ENCODE measurements at regions of chr2 and their contacts with region 1.

Region 1: DNA sequence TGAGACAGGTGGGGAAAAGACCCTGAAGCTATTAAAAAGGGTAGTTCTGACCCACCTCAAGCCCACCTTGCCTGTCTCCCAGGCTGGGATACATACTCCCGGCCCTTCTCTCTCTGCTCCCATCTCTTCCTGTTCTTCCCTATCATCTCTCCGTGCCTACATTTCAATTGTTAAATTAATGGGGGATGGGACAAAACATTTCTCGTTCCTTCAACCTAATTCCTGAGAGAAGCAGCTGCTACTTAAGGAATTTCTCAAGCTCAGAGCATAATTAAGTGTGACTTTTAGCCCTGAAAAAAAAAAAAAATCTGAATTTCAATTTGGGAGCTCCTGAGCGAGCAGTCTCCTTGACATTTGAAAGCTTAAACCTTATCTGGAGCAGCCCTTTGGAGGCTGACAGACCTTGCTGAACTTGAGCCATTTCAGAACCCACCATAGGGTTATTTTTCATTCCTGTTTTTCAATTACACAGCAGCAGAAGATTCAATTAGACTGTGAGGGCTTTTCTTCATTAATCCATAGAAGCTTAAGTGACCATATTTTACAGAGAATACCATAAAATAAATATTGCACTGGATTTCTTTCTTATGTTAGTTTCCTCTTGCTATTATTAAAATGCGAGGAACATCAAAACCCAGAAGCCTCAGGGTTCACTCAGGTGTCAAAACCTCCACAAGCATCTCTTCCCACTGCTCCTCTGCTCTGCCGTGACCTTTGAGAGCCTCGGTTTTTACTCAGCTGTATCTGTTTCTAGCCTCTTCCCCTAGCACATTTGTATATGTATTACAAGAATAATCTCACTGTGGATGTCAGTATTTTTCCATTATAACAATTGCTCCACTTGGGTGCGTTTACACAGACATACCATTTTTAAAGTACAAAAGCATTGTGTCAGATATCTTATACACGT is 125.7 kb downstream of the B3GNT2 start:
- DNase-seq: no peak
- CTCF ChIP-seq: no peak

Region 2: DNA sequence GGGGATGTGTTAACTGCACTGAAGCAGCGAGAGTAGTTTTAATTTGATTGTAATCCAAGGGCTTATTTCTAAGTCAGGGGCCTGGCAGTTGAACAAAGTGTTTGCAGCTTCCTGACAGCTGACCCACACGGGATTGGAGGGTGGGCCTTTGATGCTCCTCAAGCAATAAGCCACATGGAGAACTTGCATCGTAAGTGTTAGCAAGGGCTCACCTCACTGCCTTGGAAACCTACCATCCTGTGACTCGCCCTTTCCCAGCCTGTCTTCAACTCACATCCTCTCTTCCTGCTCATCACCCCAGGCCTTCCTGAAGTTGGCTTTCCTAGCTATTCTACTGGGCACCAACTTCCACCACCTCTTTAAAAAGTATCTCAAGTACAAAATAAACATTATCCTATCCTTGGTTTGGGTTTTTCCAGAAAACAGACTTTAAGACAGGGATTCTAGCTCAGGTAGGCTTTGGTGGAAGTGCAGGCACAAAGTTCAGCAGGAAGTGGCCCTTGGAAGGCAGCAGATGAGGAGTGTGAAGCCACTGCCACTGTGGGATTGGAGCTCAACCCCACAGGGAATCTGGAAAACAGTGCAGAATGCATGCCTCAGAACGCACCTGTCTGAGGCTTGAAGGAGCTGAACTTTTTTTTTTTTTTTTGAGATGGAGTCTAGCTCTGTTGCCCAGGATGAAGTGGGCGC is 94.1 kb before region 1 on chr2:
- CTCF ChIA-PET with region 1: no interaction called
- POLR2A ChIA-PET with region 1: no interaction called
- DNase-seq: no peak
- CTCF ChIP-seq: no peak

Region 3: GRCh38 chr2:62248221-62248620 is 73.4 kb before region 1 on chr2:
- CTCF ChIA-PET with region 1: no interaction called
- POLR2A ChIA-PET with region 1: no interaction called
- DNase-seq: no peak
- CTCF ChIP-seq: no peak

Region 4: GRCh38 chr2:62334440-62335058 is 12.9 kb after region 1 on chr2:
- CTCF ChIA-PET with region 1: interaction called, 39 read pairs
- POLR2A ChIA-PET with region 1: interaction called, 6 read pairs
- DNase-seq: peak; percentile 40
- CTCF ChIP-seq: no peak

Region 5: DNA sequence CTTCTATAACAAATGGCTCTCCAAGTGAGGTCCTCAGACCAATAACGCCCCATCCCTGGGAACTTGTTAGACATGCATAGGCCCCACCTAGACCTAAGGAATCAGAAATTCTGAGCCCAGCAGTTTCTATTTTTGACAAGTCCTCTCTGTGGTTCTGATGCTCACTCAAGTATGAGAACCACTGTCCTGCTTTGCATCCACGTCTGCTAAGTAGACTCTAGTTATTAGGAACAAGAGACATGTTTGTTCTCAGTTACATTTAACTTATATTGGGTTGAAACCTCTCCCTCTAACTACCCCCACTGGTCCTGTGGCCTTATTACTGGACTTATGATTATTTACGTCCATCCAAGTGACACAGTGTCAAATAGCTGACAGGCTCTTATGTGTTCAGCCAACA is 114.1 kb after region 1 on chr2:
- CTCF ChIA-PET with region 1: no interaction called
- POLR2A ChIA-PET with region 1: no interaction called
- DNase-seq: peak; percentile 60
- CTCF ChIP-seq: no peak

Measured in GM10248 (cell line).